GM12878 (cell line): ENCODE measurements at regions of chr1 and their contacts with region 1.

Region 1: GRCh38 chr1:174789399-174789798 is 210.3 kb upstream of the CACYBP start:
- DNase-seq: peak; percentile 50
- ATAC-seq: peak; percentile 86
- H3K4me3 ChIP-seq: no peak overlapping the region
- H3K27ac ChIP-seq: no peak overlapping the region
- H3K4me1 ChIP-seq: peaks cover 32% of the 10 kb centered on the region
- H3K27me3 ChIP-seq: no peaks in the 10 kb centered on the region
- CTCF ChIP-seq: no peak
- EP300 ChIP-seq: peak; percentile 37 to 76; a peak in 2 of 4 replicates
- POLR2A ChIP-seq: no peak
- RAD21 ChIP-seq: no peak

Region 2: DNA sequence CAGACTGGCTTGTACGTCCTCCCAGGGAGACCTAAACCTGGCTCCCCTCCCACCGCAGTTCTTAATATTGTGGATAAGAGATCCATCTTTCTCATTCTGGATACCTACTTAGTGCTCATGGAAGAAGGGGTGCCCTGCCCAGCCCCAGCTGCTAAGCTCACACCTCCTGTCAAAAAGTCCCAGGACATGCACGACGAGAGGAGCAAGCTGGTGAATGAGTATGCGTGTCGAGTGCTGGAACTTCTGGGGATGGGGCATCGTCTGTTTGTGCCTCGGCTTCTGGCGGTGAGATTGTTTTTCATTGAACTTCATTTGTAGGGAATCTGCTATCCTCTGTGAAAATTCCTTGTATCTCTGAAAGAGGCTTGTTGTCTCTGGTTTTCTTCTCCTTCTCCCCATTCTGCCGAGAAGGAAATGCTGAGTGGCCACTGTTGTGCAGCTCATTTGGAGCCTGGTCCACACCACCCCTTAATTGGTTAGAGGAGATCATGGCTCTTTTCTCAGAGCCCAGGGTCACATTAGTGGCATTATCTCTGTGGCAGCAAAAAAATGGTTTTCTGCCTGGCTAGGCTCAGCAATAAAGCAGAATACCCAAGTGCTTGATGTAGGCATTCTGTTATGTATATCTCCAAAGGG is 10.9 kb after region 1 on chr1:
- CTCF ChIA-PET with region 1: interaction called, 3 read pairs
- POLR2A ChIA-PET with region 1: interaction called, 10 read pairs
- RAD21 ChIA-PET with region 1: interaction called, 5 read pairs
- SMC1A ChIA-PET with region 1: interaction called, 15 read pairs
- in situ Hi-C with region 1: no loop called
- intact Hi-C with region 1: no loop called
- DNase-seq: no peak
- ATAC-seq: peak; percentile 21
- H3K4me3 ChIP-seq: peak overlapping the region; percentile 79
- H3K27ac ChIP-seq: peak overlapping the region; percentile 77
- H3K4me1 ChIP-seq: peaks cover 23% of the 10 kb centered on the region
- H3K27me3 ChIP-seq: no peaks in the 10 kb centered on the region
- CTCF ChIP-seq: no peak
- EP300 ChIP-seq: no peak
- POLR2A ChIP-seq: no peak
- RAD21 ChIP-seq: no peak

Region 3: GRCh38 chr1:174874331-174875053 is 85.1 kb after region 1 on chr1:
- CTCF ChIA-PET with region 1: no interaction called
- POLR2A ChIA-PET with region 1: no interaction called
- RAD21 ChIA-PET with region 1: no interaction called
- SMC1A ChIA-PET with region 1: interaction called, 9 read pairs
- in situ Hi-C with region 1: no loop called
- intact Hi-C with region 1: loop called (anchors 2 kb)
- DNase-seq: peak; percentile 40
- ATAC-seq: peak; percentile 83
- H3K4me3 ChIP-seq: peak overlapping the region; percentile 54; the same call in 1 of the 2 replicates
- H3K27ac ChIP-seq: peak overlapping the region; percentile 47
- H3K4me1 ChIP-seq: peaks cover 25% of the 10 kb centered on the region
- H3K27me3 ChIP-seq: no peaks in the 10 kb centered on the region
- CTCF ChIP-seq: no peak
- EP300 ChIP-seq: no peak
- POLR2A ChIP-seq: no peak
- RAD21 ChIP-seq: no peak

Region 4: GRCh38 chr1:175033953-175034352 is 244.6 kb after region 1 on chr1:
- CTCF ChIA-PET with region 1: no interaction called
- POLR2A ChIA-PET with region 1: no interaction called
- RAD21 ChIA-PET with region 1: no interaction called
- SMC1A ChIA-PET with region 1: no interaction called
- in situ Hi-C with region 1: no loop called
- intact Hi-C with region 1: no loop called
- DNase-seq: no peak
- ATAC-seq: no peak
- H3K4me3 ChIP-seq: no peak overlapping the region
- H3K27ac ChIP-seq: no peak overlapping the region
- H3K4me1 ChIP-seq: peaks cover 4% of the 10 kb centered on the region
- H3K27me3 ChIP-seq: peaks cover 0 to 3% of the 10 kb centered on the region in 2 experiments; a peak in 2 of 4 replicates
- CTCF ChIP-seq: no peak
- EP300 ChIP-seq: no peak
- POLR2A ChIP-seq: no peak
- RAD21 ChIP-seq: no peak